ENCODE measurements at regions of chr1 and their contacts with region 1.

Region 1: GRCh38 chr1:21270086-21270689 is 20.1 kb downstream of the ECE1 start:
- DNase-seq: peak; percentile 84
- H3K4me3 ChIP-seq: no peak overlapping the region
- H3K27ac ChIP-seq: no peak overlapping the region
- H3K4me1 ChIP-seq: peaks cover 60% of the 10 kb centered on the region
- H3K27me3 ChIP-seq: no peaks in the 10 kb centered on the region
- CTCF ChIP-seq: peak; percentile 98
- POLR2A ChIP-seq: no peak

Region 2: DNA sequence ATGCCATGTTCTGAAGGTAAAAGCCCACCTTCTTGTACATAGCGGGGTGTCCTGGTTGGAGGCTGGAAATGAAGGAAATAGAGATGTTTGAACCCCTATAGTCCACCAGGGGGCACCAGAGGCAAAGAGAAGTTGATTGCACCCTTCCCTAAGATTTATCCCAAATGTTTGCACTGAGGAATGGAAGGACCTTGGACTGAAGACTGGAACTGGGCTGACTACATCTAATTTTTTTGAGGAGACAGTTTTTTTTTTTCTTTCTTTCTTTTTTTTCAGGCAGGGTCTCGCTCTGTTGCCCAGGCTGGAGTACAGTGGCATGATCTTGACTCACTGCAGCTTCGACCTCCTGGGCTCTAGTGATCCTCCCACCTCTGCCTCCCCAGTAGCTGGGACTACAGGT is 38.1 kb before region 1 on chr1:
- CTCF ChIA-PET with region 1: interaction called, 19 read pairs
- POLR2A ChIA-PET with region 1: no interaction called
- dilution Hi-C with region 1: no loop called
- intact Hi-C with region 1: no loop called
- DNase-seq: peak; percentile 67
- H3K4me3 ChIP-seq: no peak overlapping the region
- H3K27ac ChIP-seq: no peak overlapping the region
- H3K4me1 ChIP-seq: no peaks in the 10 kb centered on the region
- H3K27me3 ChIP-seq: no peaks in the 10 kb centered on the region
- CTCF ChIP-seq: peak; percentile 68 to 73
- POLR2A ChIP-seq: no peak

Region 3: GRCh38 chr1:21287905-21288514 is 17.8 kb after region 1 on chr1:
- CTCF ChIA-PET with region 1: interaction called, 117 read pairs
- POLR2A ChIA-PET with region 1: no interaction called
- dilution Hi-C with region 1: no loop called
- intact Hi-C with region 1: no loop called
- DNase-seq: no peak
- H3K4me3 ChIP-seq: no peak overlapping the region
- H3K27ac ChIP-seq: no peak overlapping the region
- H3K4me1 ChIP-seq: peaks cover 16% of the 10 kb centered on the region
- H3K27me3 ChIP-seq: no peaks in the 10 kb centered on the region
- CTCF ChIP-seq: no peak
- POLR2A ChIP-seq: no peak

Region 4: GRCh38 chr1:21302747-21303715 is 32.8 kb after region 1 on chr1:
- CTCF ChIA-PET with region 1: interaction called, 32 read pairs
- POLR2A ChIA-PET with region 1: no interaction called
- dilution Hi-C with region 1: no loop called
- intact Hi-C with region 1: no loop called
- DNase-seq: peak; percentile 78
- H3K4me3 ChIP-seq: no peak overlapping the region
- H3K27ac ChIP-seq: peak overlapping the region; percentile 90
- H3K4me1 ChIP-seq: peaks cover 46% of the 10 kb centered on the region
- H3K27me3 ChIP-seq: no peaks in the 10 kb centered on the region
- CTCF ChIP-seq: peak; percentile 4 to 19
- POLR2A ChIP-seq: peak; percentile 26

Region 5: GRCh38 chr1:21324368-21325141 is 54.4 kb after region 1 on chr1:
- CTCF ChIA-PET with region 1: interaction called, 67 read pairs
- POLR2A ChIA-PET with region 1: interaction called, 3 read pairs
- dilution Hi-C with region 1: no loop called
- intact Hi-C with region 1: no loop called
- DNase-seq: peak; percentile 93
- H3K4me3 ChIP-seq: no peak overlapping the region
- H3K27ac ChIP-seq: peak overlapping the region; percentile 96
- H3K4me1 ChIP-seq: peaks cover 62% of the 10 kb centered on the region
- H3K27me3 ChIP-seq: no peaks in the 10 kb centered on the region
- CTCF ChIP-seq: no peak
- POLR2A ChIP-seq: peak; percentile 39

Region 6: DNA sequence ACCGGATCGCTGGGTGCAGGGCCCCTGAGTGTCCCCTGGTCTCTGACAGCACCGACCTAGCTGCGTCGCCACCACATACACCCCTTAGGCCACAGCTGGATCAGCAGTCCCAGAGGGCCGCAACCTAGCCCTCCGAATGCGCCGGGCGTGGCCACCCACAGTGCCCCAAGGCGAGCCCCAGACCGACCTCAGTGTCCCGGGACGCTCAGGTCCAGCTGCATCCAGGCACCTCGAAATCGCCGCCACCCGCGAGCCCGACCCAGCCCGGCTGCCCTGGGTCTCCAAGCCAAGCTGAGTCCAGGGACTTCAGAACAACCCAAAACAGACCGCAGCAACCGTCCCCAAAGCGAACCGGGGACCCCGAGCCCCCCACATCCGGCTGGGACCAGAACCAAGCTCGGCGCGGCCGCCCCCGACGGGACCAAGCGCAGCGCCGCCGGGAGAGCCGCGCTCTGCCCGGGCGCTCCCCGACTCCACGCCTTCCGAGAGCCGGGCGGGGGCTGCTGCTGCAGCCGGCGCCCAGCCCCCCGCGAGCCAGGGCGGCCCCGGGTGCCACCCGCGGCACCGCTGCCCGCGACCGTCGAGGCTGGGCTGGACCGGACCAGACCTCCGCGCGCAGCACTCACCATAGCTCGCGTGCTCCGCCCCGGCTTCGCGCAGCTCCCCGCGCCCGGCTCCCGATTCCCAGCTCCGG is 74.7 kb after region 1 on chr1:
- CTCF ChIA-PET with region 1: interaction called, 22 read pairs
- POLR2A ChIA-PET with region 1: interaction called, 4 read pairs
- dilution Hi-C with region 1: no loop called
- intact Hi-C with region 1: no loop called
- DNase-seq: no peak
- H3K4me3 ChIP-seq: peak overlapping the region; percentile 40 to 82 (median 66)
- H3K27ac ChIP-seq: peak overlapping the region; percentile 14
- H3K4me1 ChIP-seq: peaks cover 38% of the 10 kb centered on the region
- H3K27me3 ChIP-seq: no peaks in the 10 kb centered on the region
- CTCF ChIP-seq: no peak
- POLR2A ChIP-seq: no peak

Region 7: GRCh38 chr1:21451212-21451812 is 181.1 kb after region 1 on chr1:
- CTCF ChIA-PET with region 1: no interaction called
- POLR2A ChIA-PET with region 1: no interaction called
- dilution Hi-C with region 1: no loop called
- intact Hi-C with region 1: no loop called
- DNase-seq: no peak
- H3K4me3 ChIP-seq: no peak overlapping the region
- H3K27ac ChIP-seq: no peak overlapping the region
- H3K4me1 ChIP-seq: peaks cover 5% of the 10 kb centered on the region
- H3K27me3 ChIP-seq: no peaks in the 10 kb centered on the region
- CTCF ChIP-seq: no peak
- POLR2A ChIP-seq: no peak

Measured in endothelial cell of umbilical vein (primary cell).